ENCODE measurements at regions of chr9 and their contacts with region 1.

Region 1: DNA sequence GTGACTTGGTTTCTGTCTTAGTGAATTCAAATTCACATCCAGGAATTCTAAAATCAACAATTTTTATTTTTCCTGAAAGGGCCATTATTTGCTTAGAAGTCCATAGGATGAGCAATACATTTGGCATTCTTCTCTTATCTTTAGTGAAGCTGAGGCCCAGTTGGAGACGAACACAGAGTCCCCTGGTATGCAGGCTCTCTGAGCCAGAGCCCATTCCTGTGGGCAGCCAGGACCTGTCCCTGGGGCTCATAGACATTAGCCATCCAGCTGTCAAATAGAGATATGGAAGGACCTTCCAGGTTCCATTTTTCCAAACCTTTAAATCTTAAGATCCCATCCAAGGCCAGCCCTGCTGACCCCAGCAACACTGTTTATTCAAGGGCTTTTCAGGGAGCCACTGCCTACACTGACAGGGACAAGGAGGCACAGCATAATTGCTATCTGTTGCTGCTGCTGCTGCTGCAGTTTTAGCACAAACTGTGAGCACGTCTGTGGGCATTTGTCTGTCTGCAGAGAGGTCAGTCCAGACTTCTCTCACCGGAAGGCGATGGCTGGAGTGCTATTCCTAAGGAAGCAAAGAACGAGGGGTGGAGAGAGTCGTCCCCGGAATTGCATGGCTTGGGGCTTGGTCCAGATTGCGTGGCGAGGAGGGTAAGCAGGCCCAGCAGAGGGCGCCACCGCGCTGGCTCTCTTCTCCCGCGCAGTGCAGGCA is 639.0 kb downstream of the CCDC171 start:
- DNase-seq: peak; percentile 84 to 93
- ATAC-seq: peak; percentile 94
- H3K4me3 ChIP-seq: no peak overlapping the region
- H3K27ac ChIP-seq: peak overlapping the region in 1 of 2 donors; percentile 38
- H3K4me1 ChIP-seq: peaks cover 3 to 4% of the 10 kb centered on the region in 2 donors
- H3K27me3 ChIP-seq: no peaks in the 10 kb centered on the region

Region 2: GRCh38 chr9:16417161-16417560 is 225.3 kb after region 1 on chr9:
- intact Hi-C with region 1: loop called in 1 of 2 experiments (anchors 10 kb)
- DNase-seq: no peak
- ATAC-seq: no peak
- H3K4me3 ChIP-seq: no peak overlapping the region
- H3K27ac ChIP-seq: no peak overlapping the region
- H3K4me1 ChIP-seq: no peaks in the 10 kb centered on the region
- H3K27me3 ChIP-seq: no peaks in the 10 kb centered on the region

Region 3: GRCh38 chr9:16515879-16516301 is 324.0 kb after region 1 on chr9:
- intact Hi-C with region 1: loop called in 1 of 2 experiments (anchors 10 kb)
- DNase-seq: no peak
- ATAC-seq: peak; percentile 88
- H3K4me3 ChIP-seq: no peak overlapping the region
- H3K27ac ChIP-seq: peak overlapping the region in 1 of 2 donors; percentile 71
- H3K4me1 ChIP-seq: peaks cover 2 to 4% of the 10 kb centered on the region in 2 donors
- H3K27me3 ChIP-seq: no peaks in the 10 kb centered on the region

Region 4: GRCh38 chr9:16611983-16612382 is 420.1 kb after region 1 on chr9:
- intact Hi-C with region 1: loop called in 1 of 2 experiments (anchors 10 kb)
- DNase-seq: no peak
- ATAC-seq: no peak
- H3K4me3 ChIP-seq: no peak overlapping the region
- H3K27ac ChIP-seq: no peak overlapping the region
- H3K4me1 ChIP-seq: no peaks in the 10 kb centered on the region
- H3K27me3 ChIP-seq: no peaks in the 10 kb centered on the region

Region 5: GRCh38 chr9:16626577-16627131 is 434.8 kb after region 1 on chr9:
- intact Hi-C with region 1: loop called in 1 of 2 experiments (anchors 10 kb)
- DNase-seq: no peak
- ATAC-seq: peak; percentile 81
- H3K4me3 ChIP-seq: peak overlapping the region in 1 of 2 donors; percentile 47
- H3K27ac ChIP-seq: peak overlapping the region in 1 of 2 donors; percentile 50
- H3K4me1 ChIP-seq: peaks cover 0 to 2% of the 10 kb centered on the region in 2 donors
- H3K27me3 ChIP-seq: no peaks in the 10 kb centered on the region

Region 6: GRCh38 chr9:16871356-16872151 is 679.7 kb after region 1 on chr9:
- intact Hi-C with region 1: loop called in 1 of 2 experiments (anchors 10 kb)
- DNase-seq: peak; percentile 84 to 86
- ATAC-seq: peak; percentile 73
- H3K4me3 ChIP-seq: peak overlapping the region; percentile 73
- H3K27ac ChIP-seq: peak overlapping the region in 1 of 2 donors; percentile 30
- H3K4me1 ChIP-seq: no peaks in the 10 kb centered on the region
- H3K27me3 ChIP-seq: no peaks in the 10 kb centered on the region